ENCODE measurements at regions of chr4 and their contacts with region 1.

Region 1: GRCh38 chr4:10157478-10158332 is 41.1 kb upstream of the WDR1 start:
- DNase-seq: peak in 2 of 3 donors; percentile 36 to 61
- ATAC-seq: peak; percentile 78 to 82 (median 80)
- H3K4me3 ChIP-seq: no peak overlapping the region
- H3K27ac ChIP-seq: no peak overlapping the region
- H3K4me1 ChIP-seq: peaks cover 0 to 15% (median 4%) of the 10 kb centered on the region in 4 donors
- H3K27me3 ChIP-seq: no peaks in the 10 kb centered on the region
- CTCF ChIP-seq: peak; percentile 76 to 82 (median 80)
- POLR2A ChIP-seq: no peak

Region 2: DNA sequence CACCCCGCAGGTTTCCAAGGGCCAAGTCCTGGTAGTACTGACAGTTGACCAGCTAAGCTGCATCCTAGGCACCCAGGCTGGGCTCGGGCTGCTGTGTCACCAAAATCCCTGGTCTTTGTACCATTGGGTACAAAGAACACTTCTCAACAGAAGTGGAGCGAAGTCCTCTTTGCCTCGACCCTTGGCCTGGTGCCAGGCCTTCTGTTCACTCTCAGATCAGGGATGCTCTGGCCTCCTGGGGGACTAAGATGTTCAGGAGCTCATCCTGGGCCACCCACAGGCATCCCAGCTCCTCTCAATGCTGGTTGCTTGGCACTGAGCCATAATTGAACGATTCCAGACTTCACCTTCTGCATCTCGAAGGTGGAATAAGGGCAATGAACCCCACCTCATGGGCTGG is 122.6 kb before region 1 on chr4:
- intact Hi-C with region 1: no loop called
- DNase-seq: peak in 2 of 3 donors; percentile 49 to 58
- ATAC-seq: no peak
- H3K4me3 ChIP-seq: no peak overlapping the region
- H3K27ac ChIP-seq: no peak overlapping the region
- H3K4me1 ChIP-seq: peaks cover 0 to 15% (median 1%) of the 10 kb centered on the region in 4 donors
- H3K27me3 ChIP-seq: no peaks in the 10 kb centered on the region
- CTCF ChIP-seq: no peak
- POLR2A ChIP-seq: no peak

Region 3: GRCh38 chr4:10115851-10116579 is 41.7 kb before region 1 on chr4:
- intact Hi-C with region 1: no loop called
- DNase-seq: peak; percentile 68 to 78 (median 72)
- ATAC-seq: peak; percentile 49 to 61 (median 54)
- H3K4me3 ChIP-seq: peak overlapping the region; percentile 83 to 90 (median 89)
- H3K27ac ChIP-seq: peak overlapping the region; percentile 84 to 97 (median 85)
- H3K4me1 ChIP-seq: peaks cover 0 to 12% (median 3%) of the 10 kb centered on the region in 4 donors
- H3K27me3 ChIP-seq: no peaks in the 10 kb centered on the region
- CTCF ChIP-seq: no peak
- POLR2A ChIP-seq: peak; percentile 10

Region 4: DNA sequence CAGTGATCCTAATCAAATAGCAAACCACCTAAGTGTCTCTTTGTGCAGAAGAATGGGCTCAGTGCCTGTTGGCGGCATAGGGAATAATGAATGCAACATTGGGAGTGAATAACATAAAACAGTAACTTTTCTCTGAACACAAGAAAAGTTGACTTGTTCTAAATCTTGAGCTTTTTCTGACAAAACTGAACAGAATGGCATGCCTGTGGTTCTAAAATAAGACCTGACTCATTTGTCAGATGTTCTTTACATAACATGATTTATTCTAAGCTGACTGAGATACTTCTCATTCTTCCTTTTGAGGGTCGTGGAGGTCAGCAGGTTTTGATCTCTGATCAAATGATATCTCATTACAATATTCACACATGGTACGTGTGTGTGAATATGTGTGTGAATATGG is 124.3 kb after region 1 on chr4:
- intact Hi-C with region 1: no loop called
- DNase-seq: no peak
- ATAC-seq: no peak
- H3K4me3 ChIP-seq: no peak overlapping the region
- H3K27ac ChIP-seq: no peak overlapping the region
- H3K4me1 ChIP-seq: no peaks in the 10 kb centered on the region
- H3K27me3 ChIP-seq: no peaks in the 10 kb centered on the region
- CTCF ChIP-seq: no peak
- POLR2A ChIP-seq: no peak

Region 5: GRCh38 chr4:10403633-10404445 is 246.1 kb after region 1 on chr4:
- intact Hi-C with region 1: loop called (anchors 5 to 10 kb)
- DNase-seq: no peak
- ATAC-seq: peak; percentile 68 to 86 (median 78)
- H3K4me3 ChIP-seq: no peak overlapping the region
- H3K27ac ChIP-seq: no peak overlapping the region
- H3K4me1 ChIP-seq: no peaks in the 10 kb centered on the region
- H3K27me3 ChIP-seq: no peaks in the 10 kb centered on the region
- CTCF ChIP-seq: peak; percentile 47 to 65 (median 57)
- POLR2A ChIP-seq: no peak

Region 6: DNA sequence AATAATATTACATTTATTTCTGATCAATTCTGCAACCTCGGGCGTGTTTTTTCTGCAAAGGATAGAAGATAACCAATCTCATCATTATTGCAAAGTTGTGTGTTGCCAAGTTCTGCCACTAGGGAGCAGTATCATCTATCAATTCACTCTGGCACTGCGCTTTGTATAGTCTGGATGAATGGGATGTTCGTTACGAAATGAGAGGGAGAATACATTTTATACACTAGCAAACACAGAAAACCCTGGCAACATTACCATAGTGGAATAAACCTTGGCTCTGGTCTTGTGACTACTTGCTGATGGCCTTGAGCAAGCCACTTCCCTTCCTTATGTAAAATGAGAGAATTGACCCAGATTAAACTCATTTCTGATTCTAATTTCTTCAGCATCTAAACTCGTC is 397.0 kb after region 1 on chr4:
- intact Hi-C with region 1: loop called in 1 of 2 experiments (anchors 5 kb)
- DNase-seq: peak in 1 of 3 donors; percentile 48
- ATAC-seq: peak; percentile 89 to 96 (median 94)
- H3K4me3 ChIP-seq: no peak overlapping the region
- H3K27ac ChIP-seq: no peak overlapping the region
- H3K4me1 ChIP-seq: no peaks in the 10 kb centered on the region
- H3K27me3 ChIP-seq: no peaks in the 10 kb centered on the region
- CTCF ChIP-seq: peak; percentile 79 to 83 (median 82)
- POLR2A ChIP-seq: no peak